CD4-positive, alpha-beta T cell (primary cell): ENCODE measurements at regions of chr3 and their contacts with region 1.

Region 1: DNA sequence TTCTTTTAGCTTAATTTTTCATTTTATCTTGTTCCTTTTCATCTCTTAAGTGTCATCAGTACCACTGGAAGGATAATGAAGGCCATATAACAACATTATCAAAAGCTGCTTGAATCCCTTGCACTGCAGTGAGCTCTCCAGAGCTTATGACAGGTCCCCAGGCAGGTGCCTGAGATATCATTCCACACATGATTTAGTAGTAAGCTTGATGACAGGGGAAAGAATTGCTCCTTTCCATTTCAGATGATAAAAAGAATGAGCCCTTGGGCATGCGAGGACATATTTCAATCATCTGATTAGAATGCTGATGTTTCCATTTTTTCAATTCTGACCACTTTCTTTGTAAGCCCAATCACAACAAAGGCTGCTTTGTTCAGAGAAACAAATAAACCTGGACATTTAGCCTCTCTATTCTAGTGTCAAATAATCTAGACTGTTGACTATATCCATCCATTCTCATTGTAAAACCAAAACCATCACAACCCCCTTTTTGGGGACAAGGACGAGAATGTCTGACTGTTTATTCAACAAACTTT is 567.8 kb downstream of the IGSF11 start:
- DNase-seq: no peak
- ATAC-seq: no peak
- H3K4me3 ChIP-seq: no peak overlapping the region
- H3K4me3 Mint-ChIP-seq: no peak overlapping the region
- H3K27ac ChIP-seq: no peak overlapping the region
- H3K27ac Mint-ChIP-seq: no peak overlapping the region
- H3K4me1 ChIP-seq: no peaks in the 10 kb centered on the region
- H3K4me1 Mint-ChIP-seq: no peaks in the 10 kb centered on the region
- H3K27me3 ChIP-seq: no peaks in the 10 kb centered on the region
- H3K27me3 Mint-ChIP-seq: no peaks in the 10 kb centered on the region
- CTCF ChIP-seq: no peak

Region 2: DNA sequence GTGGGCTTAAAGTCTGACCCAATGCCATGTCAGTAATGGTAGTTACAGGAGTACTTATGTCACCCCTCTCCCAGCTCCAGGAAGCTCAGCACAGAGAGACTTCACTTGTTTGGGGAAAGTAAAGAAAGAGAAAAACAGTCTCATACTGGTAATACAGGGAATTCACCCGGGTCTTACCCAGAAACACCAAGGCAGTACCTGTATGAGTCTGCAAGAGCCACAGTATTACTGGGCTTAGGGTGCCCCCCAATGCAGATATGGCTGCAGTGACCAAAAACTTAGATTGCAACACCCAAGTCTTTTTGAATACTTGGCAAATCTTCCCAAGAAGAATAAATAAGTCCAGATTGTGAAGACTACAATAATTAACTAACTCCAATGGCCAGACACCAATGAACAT is 54.4 kb before region 1 on chr3:
- CTCF ChIA-PET with region 1: no interaction called
- POLR2A ChIA-PET with region 1: no interaction called
- intact Hi-C with region 1: loop called in 1 of 2 experiments (anchors 2 kb)
- DNase-seq: no peak
- ATAC-seq: no peak
- H3K4me3 ChIP-seq: no peak overlapping the region
- H3K4me3 Mint-ChIP-seq: no peak overlapping the region
- H3K27ac ChIP-seq: no peak overlapping the region
- H3K27ac Mint-ChIP-seq: no peak overlapping the region
- H3K4me1 ChIP-seq: no peaks in the 10 kb centered on the region
- H3K4me1 Mint-ChIP-seq: no peaks in the 10 kb centered on the region
- H3K27me3 ChIP-seq: no peaks in the 10 kb centered on the region
- H3K27me3 Mint-ChIP-seq: no peaks in the 10 kb centered on the region
- CTCF ChIP-seq: no peak